ENCODE measurements at regions of chr14 and their contacts with region 1.

Region 1: DNA sequence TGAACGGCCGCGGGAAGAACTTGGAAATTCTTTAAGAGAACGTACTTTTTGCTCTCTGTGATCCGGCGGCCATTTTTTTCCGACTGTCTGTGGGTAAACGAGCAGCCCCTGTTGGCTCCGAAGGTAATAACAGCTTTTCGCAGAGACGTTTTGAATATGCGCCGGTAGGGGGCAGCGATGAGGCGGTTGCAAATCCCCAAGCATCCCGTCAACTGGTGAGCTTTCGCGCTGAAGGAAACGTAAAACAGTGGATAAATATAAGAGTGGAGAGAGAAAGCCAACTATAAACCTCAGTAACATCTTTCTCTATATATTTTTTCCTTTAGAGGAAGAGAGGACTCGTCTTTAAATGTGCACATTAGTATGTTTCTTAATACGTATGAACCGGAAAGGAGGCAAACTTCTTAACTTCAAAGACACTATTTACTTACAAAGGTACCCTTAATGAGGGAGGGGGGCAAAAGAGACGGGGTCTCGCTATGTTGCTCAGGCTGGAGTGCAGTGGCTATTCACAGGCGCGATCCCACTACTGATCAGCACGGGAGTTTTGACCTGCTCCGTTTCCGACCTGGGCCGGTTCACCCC is 9.6 kb upstream of the NEMF start:
- DNase-seq: peak; percentile 91
- H3K4me3 Mint-ChIP-seq: no peak overlapping the region
- H3K27ac Mint-ChIP-seq: no peak overlapping the region
- H3K4me1 Mint-ChIP-seq: peaks cover 14% of the 10 kb centered on the region
- H3K27me3 Mint-ChIP-seq: peaks cover 2% of the 10 kb centered on the region

Region 2: GRCh38 chr14:49620182-49621113 is 241.7 kb before region 1 on chr14 and contains the starts of genes MGAT2 and RPL36AL:
- CTCF ChIA-PET with region 1: interaction called, 4 read pairs
- intact Hi-C with region 1: loop called (anchors 1 kb)
- DNase-seq: peak; percentile 97
- H3K4me3 Mint-ChIP-seq: peak within 1 kb of the TSS; percentile 97
- H3K27ac Mint-ChIP-seq: peak within 1 kb of the TSS; percentile 97
- H3K4me1 Mint-ChIP-seq: peaks cover 52% of the 10 kb centered on the region
- H3K27me3 Mint-ChIP-seq: no peaks in the 10 kb centered on the region
- total RNA-seq, gene MGAT2: 20.6 to 20.7 TPM
- total RNA-seq, gene RPL36AL: 250 to 266 TPM

Region 3: DNA sequence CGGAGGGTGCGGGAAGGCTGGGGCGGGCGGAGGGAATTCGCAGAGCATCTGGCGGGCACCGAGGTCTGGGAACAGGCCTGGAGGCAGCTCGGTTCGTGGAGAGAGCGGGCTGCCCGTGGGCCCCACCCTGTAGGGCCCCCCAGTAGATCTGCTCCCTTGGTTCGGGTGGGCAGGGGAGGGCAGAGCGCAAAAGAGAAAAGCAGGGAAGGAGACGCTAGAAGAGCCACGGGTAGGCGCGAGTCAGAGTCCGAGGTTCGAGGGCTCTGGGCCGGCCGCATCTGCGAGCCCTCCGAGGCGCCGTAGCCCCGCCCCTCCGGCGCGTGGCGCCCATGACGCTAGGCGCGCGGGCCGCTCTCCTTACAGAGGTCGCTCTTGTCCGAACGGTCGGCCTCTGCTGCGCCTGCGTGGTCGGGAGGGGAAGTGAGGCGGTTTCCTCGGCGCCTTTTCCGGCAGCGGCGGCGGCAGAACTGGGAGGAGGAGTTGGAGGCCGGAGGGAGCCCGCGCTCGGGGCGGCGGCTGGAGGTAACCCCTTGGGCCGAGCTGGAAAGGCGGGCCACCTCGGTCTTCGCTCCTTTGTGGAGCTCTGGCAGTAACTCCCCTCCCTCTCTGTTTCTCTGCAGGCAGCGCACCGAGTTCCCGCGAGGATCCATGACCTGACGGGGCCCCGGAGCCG is 30.6 kb after region 1 on chr14 and contains the start of gene ARF6:
- CTCF ChIA-PET with region 1: interaction called, 22 read pairs
- intact Hi-C with region 1: loop called (anchors 1 kb)
- DNase-seq: peak; percentile 98
- H3K4me3 Mint-ChIP-seq: peak within 1 kb of the TSS; percentile 100
- H3K27ac Mint-ChIP-seq: peak within 1 kb of the TSS; percentile 100
- H3K4me1 Mint-ChIP-seq: peaks cover 19% of the 10 kb centered on the region
- H3K27me3 Mint-ChIP-seq: no peaks in the 10 kb centered on the region
- total RNA-seq, gene ARF6: 128 to 129 TPM

Region 4: DNA sequence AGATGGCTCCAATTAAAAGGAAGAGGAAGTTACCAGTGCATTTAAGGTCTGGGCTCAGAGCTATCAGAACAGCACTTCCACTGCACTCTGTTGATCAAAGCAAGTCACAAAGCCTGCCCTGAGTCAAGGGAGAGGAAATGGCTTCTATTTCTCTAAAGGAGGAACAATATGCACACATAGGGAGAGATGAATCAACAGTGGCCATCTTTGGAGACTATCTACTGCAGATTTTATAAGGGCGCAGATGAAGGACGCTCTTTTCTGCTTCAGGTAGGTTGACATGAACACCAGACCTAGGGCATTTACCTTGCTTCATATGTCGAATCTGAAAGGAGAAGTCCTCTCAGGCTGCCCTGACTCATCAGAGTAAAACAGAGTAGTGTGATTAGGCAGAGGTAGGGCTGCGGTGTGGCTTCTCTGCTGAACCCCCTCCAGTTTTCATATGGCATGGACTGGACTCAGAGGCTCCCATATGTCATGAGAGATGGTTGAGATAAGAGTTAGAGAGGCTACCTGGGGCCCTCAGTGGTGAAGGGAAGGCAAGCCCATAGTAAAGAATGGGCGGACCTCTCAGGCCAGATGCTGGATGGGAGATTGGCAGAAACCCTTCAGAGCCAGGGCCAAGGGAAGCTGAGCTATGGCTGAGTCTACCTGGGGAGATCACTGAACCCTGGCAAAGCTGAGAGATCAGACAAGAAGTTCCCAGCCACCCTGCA is 115.1 kb after region 1 on chr14:
- CTCF ChIA-PET with region 1: interaction called, 11 read pairs
- intact Hi-C with region 1: no loop called
- DNase-seq: peak; percentile 66
- H3K4me3 Mint-ChIP-seq: peak overlapping the region; percentile 22
- H3K27ac Mint-ChIP-seq: peak overlapping the region; percentile 83
- H3K4me1 Mint-ChIP-seq: peaks cover 85% of the 10 kb centered on the region
- H3K27me3 Mint-ChIP-seq: no peaks in the 10 kb centered on the region

Region 5: GRCh38 chr14:50099335-50099734 is 237.2 kb after region 1 on chr14:
- CTCF ChIA-PET with region 1: interaction called, 49 read pairs
- intact Hi-C with region 1: no loop called
- DNase-seq: no peak
- H3K4me3 Mint-ChIP-seq: no peak overlapping the region
- H3K27ac Mint-ChIP-seq: no peak overlapping the region
- H3K4me1 Mint-ChIP-seq: peaks cover 57% of the 10 kb centered on the region
- H3K27me3 Mint-ChIP-seq: no peaks in the 10 kb centered on the region

Region 6: GRCh38 chr14:50116181-50116956 is 254.2 kb after region 1 on chr14 and contains the start of gene VCPKMT:
- CTCF ChIA-PET with region 1: interaction called, 7 read pairs
- intact Hi-C with region 1: loop called (anchors 1 kb)
- DNase-seq: peak; percentile 96
- H3K4me3 Mint-ChIP-seq: peak within 1 kb of the TSS; percentile 98
- H3K27ac Mint-ChIP-seq: peak within 1 kb of the TSS; percentile 94
- H3K4me1 Mint-ChIP-seq: peaks cover 32% of the 10 kb centered on the region
- H3K27me3 Mint-ChIP-seq: no peaks in the 10 kb centered on the region
- total RNA-seq, gene VCPKMT: 9.6 to 10.5 TPM

Region 7: GRCh38 chr14:50242586-50243310 is 380.6 kb after region 1 on chr14:
- CTCF ChIA-PET with region 1: no interaction called
- intact Hi-C with region 1: no loop called
- DNase-seq: no peak
- H3K4me3 Mint-ChIP-seq: no peak overlapping the region
- H3K27ac Mint-ChIP-seq: no peak overlapping the region
- H3K4me1 Mint-ChIP-seq: no peaks in the 10 kb centered on the region
- H3K27me3 Mint-ChIP-seq: no peaks in the 10 kb centered on the region

Measured in activated naive CD4-positive, alpha-beta T cell treated with anti-CD3 and anti-CD28 coated beads for 36 hours (primary cell).